Activated naive CD4-positive, alpha-beta T cell treated with anti-CD3 and anti-CD28 coated beads for 36 hours (primary cell): ENCODE measurements at regions of chr15 and their contacts with region 1.

Region 1: GRCh38 chr15:100341662-100342560 is at the start of gene ADAMTS17:
- DNase-seq: peak; percentile 96
- H3K4me3 Mint-ChIP-seq: peak within 1 kb of the TSS; percentile 52
- H3K27ac Mint-ChIP-seq: no peak within 1 kb of the TSS
- H3K4me1 Mint-ChIP-seq: peaks cover 9% of the 10 kb centered on the region
- H3K27me3 Mint-ChIP-seq: no peaks in the 10 kb centered on the region
- total RNA-seq, gene ADAMTS17: 0.81 to 1.0 TPM

Region 2: GRCh38 chr15:99275525-99276128 is 1066.3 kb before region 1 on chr15:
- CTCF ChIA-PET with region 1: no interaction called
- intact Hi-C with region 1: loop called (anchors 5 kb)
- DNase-seq: no peak
- H3K4me3 Mint-ChIP-seq: no peak overlapping the region
- H3K27ac Mint-ChIP-seq: no peak overlapping the region
- H3K4me1 Mint-ChIP-seq: peaks cover 27% of the 10 kb centered on the region
- H3K27me3 Mint-ChIP-seq: no peaks in the 10 kb centered on the region

Region 3: DNA sequence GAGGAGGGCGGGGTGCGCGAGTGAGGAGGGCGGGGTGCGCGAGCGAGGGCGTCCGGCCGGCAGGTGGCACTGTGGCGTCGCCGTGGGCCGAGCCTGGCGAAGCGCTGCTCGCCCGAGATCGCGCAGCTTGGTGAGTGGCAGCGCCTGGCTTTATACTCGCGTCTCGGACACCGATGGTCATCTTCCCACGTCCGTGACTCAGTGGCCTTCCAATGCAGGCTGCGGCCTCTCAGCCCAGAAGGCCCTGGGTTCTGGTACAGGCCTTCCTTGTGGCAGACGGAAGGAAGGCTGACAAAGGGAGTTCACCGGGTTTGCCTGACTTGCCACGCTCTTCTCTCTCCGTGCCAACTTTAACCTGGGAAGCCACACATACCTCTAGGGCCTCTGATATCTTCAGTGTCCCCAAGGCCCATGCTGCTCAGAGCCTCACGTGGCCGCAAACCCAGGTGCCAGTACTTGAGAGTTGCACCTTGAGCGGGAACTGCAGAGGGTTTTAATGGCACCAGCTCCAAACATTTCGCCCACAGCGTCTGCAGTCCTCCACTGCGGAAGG is 413.4 kb before region 1 on chr15:
- CTCF ChIA-PET with region 1: interaction called, 14 read pairs
- intact Hi-C with region 1: loop called (anchors 2 kb)
- DNase-seq: peak; percentile 83
- H3K4me3 Mint-ChIP-seq: peak overlapping the region; percentile 79
- H3K27ac Mint-ChIP-seq: peak overlapping the region; percentile 56
- H3K4me1 Mint-ChIP-seq: peaks cover 13% of the 10 kb centered on the region
- H3K27me3 Mint-ChIP-seq: no peaks in the 10 kb centered on the region

Region 4: GRCh38 chr15:100131321-100132224 is 210.3 kb before region 1 on chr15:
- CTCF ChIA-PET with region 1: interaction called, 9 read pairs
- intact Hi-C with region 1: loop called (anchors 1 kb)
- DNase-seq: peak; percentile 69
- H3K4me3 Mint-ChIP-seq: peak overlapping the region; percentile 47
- H3K27ac Mint-ChIP-seq: no peak overlapping the region
- H3K4me1 Mint-ChIP-seq: peaks cover 2% of the 10 kb centered on the region
- H3K27me3 Mint-ChIP-seq: no peaks in the 10 kb centered on the region

Region 5: DNA sequence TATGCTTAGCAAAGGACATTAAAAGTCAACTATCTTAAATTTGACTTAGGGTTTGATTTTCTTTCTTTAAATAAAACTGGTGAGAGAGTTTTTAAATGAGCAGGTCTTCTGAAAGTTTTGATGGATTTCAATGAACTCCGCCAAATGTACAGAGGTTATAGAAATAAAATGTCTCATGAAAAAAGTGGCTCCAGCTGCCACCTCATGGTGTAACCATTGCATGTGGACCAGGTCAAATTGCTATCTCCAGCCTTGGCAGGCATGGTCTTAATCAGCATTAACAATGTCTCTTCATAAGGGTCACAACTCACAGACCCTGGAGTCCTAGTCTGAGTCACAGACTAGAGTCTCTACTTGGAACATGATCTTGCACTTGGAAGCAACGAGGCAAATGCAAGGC is 182.5 kb before region 1 on chr15:
- CTCF ChIA-PET with region 1: no interaction called
- intact Hi-C with region 1: no loop called
- DNase-seq: no peak
- H3K4me3 Mint-ChIP-seq: no peak overlapping the region
- H3K27ac Mint-ChIP-seq: no peak overlapping the region
- H3K4me1 Mint-ChIP-seq: no peaks in the 10 kb centered on the region
- H3K27me3 Mint-ChIP-seq: no peaks in the 10 kb centered on the region

Region 6: DNA sequence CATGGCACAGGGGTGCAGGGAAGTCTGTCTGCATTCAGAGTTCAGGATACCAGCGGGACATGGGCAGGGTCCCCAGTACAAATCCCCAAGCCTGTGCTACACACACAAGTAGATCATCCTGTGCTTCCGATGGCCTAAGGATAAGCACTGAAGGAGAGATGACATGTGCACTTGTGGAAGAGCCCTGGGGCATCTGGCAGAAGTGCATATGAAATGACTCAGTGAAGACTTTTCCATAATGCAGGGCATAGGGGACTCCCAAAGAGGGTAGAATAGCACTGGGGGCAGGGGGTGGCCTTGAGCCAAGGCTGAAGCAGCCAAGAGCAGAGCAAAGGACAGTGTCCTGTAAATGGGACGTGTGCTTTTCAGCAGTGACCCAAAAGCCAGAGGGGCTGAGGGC is 23.0 kb before region 1 on chr15:
- CTCF ChIA-PET with region 1: no interaction called
- intact Hi-C with region 1: no loop called
- DNase-seq: no peak
- H3K4me3 Mint-ChIP-seq: no peak overlapping the region
- H3K27ac Mint-ChIP-seq: no peak overlapping the region
- H3K4me1 Mint-ChIP-seq: no peaks in the 10 kb centered on the region
- H3K27me3 Mint-ChIP-seq: no peaks in the 10 kb centered on the region

Region 7: GRCh38 chr15:100553468-100553867 is 211.6 kb after region 1 on chr15:
- CTCF ChIA-PET with region 1: no interaction called
- intact Hi-C with region 1: no loop called
- DNase-seq: no peak
- H3K4me3 Mint-ChIP-seq: no peak overlapping the region
- H3K27ac Mint-ChIP-seq: no peak overlapping the region
- H3K4me1 Mint-ChIP-seq: no peaks in the 10 kb centered on the region
- H3K27me3 Mint-ChIP-seq: no peaks in the 10 kb centered on the region

Region 8: DNA sequence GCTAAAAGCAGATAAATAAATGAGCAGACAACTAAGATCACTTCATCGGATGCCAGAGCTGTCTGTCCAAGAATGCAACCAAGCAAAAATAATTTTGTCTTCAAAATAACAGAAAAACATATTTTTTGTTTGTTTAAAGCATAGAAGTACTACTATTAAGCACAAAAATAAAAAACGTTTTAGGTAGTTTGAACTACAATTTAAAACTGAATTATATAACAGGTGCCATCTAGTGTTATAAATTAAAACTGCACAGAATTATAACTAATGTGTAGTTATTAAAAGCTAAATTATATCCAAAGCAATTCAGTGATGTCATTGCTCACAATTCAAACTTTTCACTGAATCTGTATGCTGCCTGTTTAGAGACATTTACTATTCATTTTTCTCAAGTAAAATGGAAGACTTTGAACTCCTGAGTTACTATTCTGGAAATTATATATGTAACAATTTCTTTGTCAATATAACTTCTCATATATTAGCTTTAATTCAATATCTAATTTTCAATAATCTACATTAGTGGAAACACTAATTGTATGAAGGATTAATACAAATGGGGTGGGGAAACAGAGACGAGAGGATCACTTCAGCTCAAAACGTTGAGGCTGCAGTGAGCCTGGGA is 230.6 kb after region 1 on chr15:
- CTCF ChIA-PET with region 1: interaction called, 3 read pairs
- intact Hi-C with region 1: loop called (anchors 1 kb)
- DNase-seq: no peak
- H3K4me3 Mint-ChIP-seq: no peak overlapping the region
- H3K27ac Mint-ChIP-seq: peak overlapping the region; percentile 84
- H3K4me1 Mint-ChIP-seq: peaks cover 57% of the 10 kb centered on the region
- H3K27me3 Mint-ChIP-seq: no peaks in the 10 kb centered on the region

Region 9: DNA sequence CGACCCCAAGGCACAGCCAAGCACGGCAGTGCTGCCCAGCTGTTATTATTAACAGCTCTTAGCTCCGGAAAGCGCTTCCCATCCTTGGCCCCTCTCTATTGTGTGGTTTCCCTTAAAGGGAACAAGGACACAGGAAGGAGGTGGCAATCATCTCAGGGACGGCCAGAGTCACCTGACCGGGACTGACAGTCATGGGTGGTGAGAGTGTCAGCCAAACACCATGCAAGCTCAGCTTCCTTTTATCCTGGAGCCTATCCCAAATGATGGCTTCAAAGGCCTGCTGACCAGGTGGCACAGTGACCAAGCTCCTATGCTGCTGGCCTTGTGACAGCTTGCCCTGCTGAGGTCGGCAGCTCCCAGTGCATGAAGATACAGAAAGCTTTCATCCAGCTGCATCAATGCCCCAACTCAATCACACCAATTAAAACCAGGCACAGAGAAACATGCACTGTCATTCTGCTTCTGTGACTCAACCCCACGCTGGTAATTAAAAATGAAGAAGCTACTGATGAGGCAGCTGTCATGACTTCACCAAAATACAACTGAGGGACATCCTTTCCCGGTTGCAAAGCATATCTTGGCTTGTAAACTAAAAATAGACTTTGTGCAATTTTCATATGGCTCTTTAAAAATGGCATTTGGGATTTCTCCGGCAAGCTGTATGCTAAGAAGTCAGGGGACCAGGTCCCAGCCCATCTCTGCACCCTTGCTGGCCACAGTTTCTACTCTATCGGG is 1113.5 kb after region 1 on chr15:
- CTCF ChIA-PET with region 1: no interaction called
- intact Hi-C with region 1: no loop called
- DNase-seq: peak; percentile 11
- H3K4me3 Mint-ChIP-seq: no peak overlapping the region
- H3K27ac Mint-ChIP-seq: no peak overlapping the region
- H3K4me1 Mint-ChIP-seq: peaks cover 4% of the 10 kb centered on the region
- H3K27me3 Mint-ChIP-seq: peaks cover 21% of the 10 kb centered on the region

Region 10: GRCh38 chr15:101723874-101724674 is 1382.2 kb after region 1 on chr15 and contains the start of gene TARS3:
- CTCF ChIA-PET with region 1: no interaction called
- intact Hi-C with region 1: loop called (anchors 5 kb)
- DNase-seq: peak; percentile 96
- H3K4me3 Mint-ChIP-seq: peak within 1 kb of the TSS; percentile 85
- H3K27ac Mint-ChIP-seq: peak within 1 kb of the TSS; percentile 72
- H3K4me1 Mint-ChIP-seq: peaks cover 11% of the 10 kb centered on the region
- H3K27me3 Mint-ChIP-seq: no peaks in the 10 kb centered on the region
- total RNA-seq, gene TARS3: 6.9 to 8.0 TPM